Activated CD8-positive, alpha-beta T cell treated with anti-CD3 and anti-CD28 coated beads for 36 hours (primary cell): ENCODE measurements at regions of chr5 and their contacts with region 1.

Region 1: GRCh38 chr5:147188200-147189108 is 46.4 kb upstream of the STK32A start:
- DNase-seq: peak; percentile 54
- ATAC-seq: peak; percentile 67
- H3K4me3 Mint-ChIP-seq: no peak overlapping the region
- H3K27ac Mint-ChIP-seq: no peak overlapping the region
- H3K4me1 Mint-ChIP-seq: peaks cover 7% of the 10 kb centered on the region
- H3K27me3 Mint-ChIP-seq: peaks cover 10% of the 10 kb centered on the region
- CTCF ChIP-seq: peak; percentile 67

Region 2: DNA sequence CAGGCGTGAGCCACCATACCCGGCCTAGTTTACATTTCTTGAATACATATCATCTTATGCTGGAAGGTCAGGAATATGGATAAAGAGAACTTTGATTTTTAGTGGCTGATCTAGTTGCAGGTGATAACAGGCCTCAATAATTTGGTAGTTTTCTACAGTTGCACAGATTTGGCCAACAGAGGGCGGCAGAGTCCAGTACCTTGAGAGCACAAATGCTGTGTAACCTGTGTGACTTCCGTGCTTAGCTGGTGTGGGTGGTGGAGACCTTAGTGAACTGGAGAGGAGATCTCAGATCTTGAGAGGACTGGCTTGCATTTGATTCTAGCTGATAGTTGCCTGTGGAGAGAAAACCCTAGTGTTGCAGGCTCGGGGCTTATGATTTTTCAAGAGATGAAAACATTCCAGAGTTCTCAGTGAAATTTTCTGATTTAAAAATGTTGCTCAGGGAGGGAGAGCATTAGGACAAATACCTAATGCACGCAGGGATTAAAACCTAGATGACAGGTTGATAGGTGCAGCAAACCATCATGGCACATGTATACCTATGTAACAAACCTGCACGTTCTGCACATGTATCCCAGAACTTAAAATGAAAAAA is 655.1 kb before region 1 on chr5:
- CTCF ChIA-PET with region 1: interaction called, 38 read pairs
- POLR2A ChIA-PET with region 1: no interaction called
- intact Hi-C with region 1: loop called (anchors 2 kb)
- DNase-seq: peak; percentile 89
- ATAC-seq: peak; percentile 95
- H3K4me3 Mint-ChIP-seq: no peak overlapping the region
- H3K27ac Mint-ChIP-seq: no peak overlapping the region
- H3K4me1 Mint-ChIP-seq: peaks cover 3% of the 10 kb centered on the region
- H3K27me3 Mint-ChIP-seq: peaks cover 1% of the 10 kb centered on the region
- CTCF ChIP-seq: peak; percentile 73

Region 3: DNA sequence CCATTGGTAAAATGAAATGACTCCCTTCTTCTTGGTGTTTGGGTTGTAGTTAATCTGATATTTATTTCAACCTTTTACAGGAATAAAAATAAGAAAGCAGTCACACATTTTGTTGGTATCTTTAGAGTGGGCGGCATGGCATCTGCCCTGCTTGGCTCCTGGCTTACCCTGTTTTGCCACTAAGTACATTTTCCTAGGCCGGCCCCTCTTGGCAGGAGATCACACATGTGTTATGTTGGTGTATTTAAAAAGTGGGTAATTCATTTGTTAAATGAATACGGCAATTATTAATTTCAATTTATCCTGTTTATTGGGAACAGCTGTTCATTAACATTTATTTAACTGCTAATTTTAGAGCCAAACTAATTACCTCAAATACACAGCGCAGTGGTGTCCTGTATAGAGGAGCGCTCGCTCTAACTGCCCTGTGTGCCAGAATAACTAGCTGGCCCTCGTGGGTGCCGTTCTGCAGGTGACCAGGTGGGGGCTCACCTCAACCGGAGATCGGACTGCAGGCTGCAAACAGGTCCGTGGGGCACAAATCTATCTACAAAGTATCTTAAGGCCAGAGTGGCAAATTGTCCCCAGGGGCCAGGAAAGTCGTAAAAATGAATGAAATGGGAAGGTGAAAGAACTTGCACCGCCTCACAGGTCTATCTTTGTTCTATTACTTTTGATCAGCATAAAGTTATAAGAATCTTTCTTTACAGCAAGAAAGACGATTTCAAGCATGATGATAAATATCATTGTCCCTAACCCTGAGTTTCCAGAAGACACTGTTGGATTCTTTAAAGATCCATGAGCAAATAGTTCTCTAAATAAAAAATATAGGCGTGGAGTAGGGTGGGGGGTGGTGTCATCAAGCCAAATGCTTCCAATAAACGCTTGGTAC is 646.2 kb before region 1 on chr5:
- CTCF ChIA-PET with region 1: interaction called, 23 read pairs
- POLR2A ChIA-PET with region 1: no interaction called
- intact Hi-C with region 1: no loop called
- DNase-seq: peak; percentile 83
- ATAC-seq: peak; percentile 98
- H3K4me3 Mint-ChIP-seq: no peak overlapping the region
- H3K27ac Mint-ChIP-seq: no peak overlapping the region
- H3K4me1 Mint-ChIP-seq: no peaks in the 10 kb centered on the region
- H3K27me3 Mint-ChIP-seq: peaks cover 1% of the 10 kb centered on the region
- CTCF ChIP-seq: peak; percentile 93

Region 4: GRCh38 chr5:146548781-146549449 is 639.5 kb before region 1 on chr5:
- CTCF ChIA-PET with region 1: interaction called, 16 read pairs
- POLR2A ChIA-PET with region 1: no interaction called
- intact Hi-C with region 1: no loop called
- DNase-seq: no peak
- ATAC-seq: no peak
- H3K4me3 Mint-ChIP-seq: no peak overlapping the region
- H3K27ac Mint-ChIP-seq: no peak overlapping the region
- H3K4me1 Mint-ChIP-seq: no peaks in the 10 kb centered on the region
- H3K27me3 Mint-ChIP-seq: peaks cover 4% of the 10 kb centered on the region
- CTCF ChIP-seq: no peak

Region 5: GRCh38 chr5:147084702-147085101 is 103.8 kb before region 1 on chr5:
- CTCF ChIA-PET with region 1: no interaction called
- POLR2A ChIA-PET with region 1: no interaction called
- intact Hi-C with region 1: no loop called
- DNase-seq: no peak
- ATAC-seq: no peak
- H3K4me3 Mint-ChIP-seq: no peak overlapping the region
- H3K27ac Mint-ChIP-seq: no peak overlapping the region
- H3K4me1 Mint-ChIP-seq: no peaks in the 10 kb centered on the region
- H3K27me3 Mint-ChIP-seq: peaks cover 2% of the 10 kb centered on the region
- CTCF ChIP-seq: no peak

Region 6: DNA sequence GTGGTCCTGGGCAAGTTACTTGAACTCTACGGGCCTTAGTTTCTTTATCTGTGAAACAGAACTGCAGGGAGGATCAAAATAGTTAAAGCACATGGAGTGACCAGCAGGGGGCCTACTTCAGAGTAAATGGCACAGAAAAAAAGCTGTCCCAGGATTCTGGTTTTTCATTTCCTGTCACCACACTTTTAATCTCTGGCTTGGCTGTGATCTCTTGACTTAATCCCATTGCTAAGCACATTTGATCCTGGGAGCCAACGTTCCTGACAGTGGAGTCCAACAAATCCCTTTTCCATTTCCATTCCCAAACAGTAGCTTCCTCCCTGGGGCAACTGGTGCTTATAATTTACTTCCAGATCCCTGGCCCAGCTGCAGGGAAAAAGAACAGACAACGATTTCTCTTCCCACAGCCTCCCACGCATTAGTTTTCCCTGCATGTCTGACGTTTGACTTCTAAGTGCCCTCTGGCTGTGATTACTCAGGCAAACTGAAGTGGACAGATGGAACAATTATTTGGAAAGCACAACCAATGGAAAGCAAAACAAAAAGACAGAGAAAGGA is 90.1 kb before region 1 on chr5:
- CTCF ChIA-PET with region 1: interaction called, 40 read pairs
- POLR2A ChIA-PET with region 1: no interaction called
- intact Hi-C with region 1: loop called (anchors 5 kb)
- DNase-seq: peak; percentile 45
- ATAC-seq: no peak
- H3K4me3 Mint-ChIP-seq: no peak overlapping the region
- H3K27ac Mint-ChIP-seq: no peak overlapping the region
- H3K4me1 Mint-ChIP-seq: no peaks in the 10 kb centered on the region
- H3K27me3 Mint-ChIP-seq: no peaks in the 10 kb centered on the region
- CTCF ChIP-seq: peak; percentile 62

Region 7: GRCh38 chr5:147203213-147203612 is 14.8 kb after region 1 on chr5:
- CTCF ChIA-PET with region 1: interaction called, 13 read pairs
- POLR2A ChIA-PET with region 1: no interaction called
- intact Hi-C with region 1: no loop called
- DNase-seq: no peak
- ATAC-seq: no peak
- H3K4me3 Mint-ChIP-seq: no peak overlapping the region
- H3K27ac Mint-ChIP-seq: no peak overlapping the region
- H3K4me1 Mint-ChIP-seq: no peaks in the 10 kb centered on the region
- H3K27me3 Mint-ChIP-seq: peaks cover 5% of the 10 kb centered on the region
- CTCF ChIP-seq: no peak